ENCODE measurements at regions of chr12 and their contacts with region 1.

Region 1: GRCh38 chr12:108724054-108724889 is 7.0 kb downstream of the CORO1C start:
- DNase-seq: no peak
- H3K4me3 Mint-ChIP-seq: no peak overlapping the region
- H3K27ac Mint-ChIP-seq: peak overlapping the region; percentile 27
- H3K4me1 Mint-ChIP-seq: peaks cover 47% of the 10 kb centered on the region
- H3K27me3 Mint-ChIP-seq: peaks cover under 1% of the 10 kb centered on the region

Region 2: DNA sequence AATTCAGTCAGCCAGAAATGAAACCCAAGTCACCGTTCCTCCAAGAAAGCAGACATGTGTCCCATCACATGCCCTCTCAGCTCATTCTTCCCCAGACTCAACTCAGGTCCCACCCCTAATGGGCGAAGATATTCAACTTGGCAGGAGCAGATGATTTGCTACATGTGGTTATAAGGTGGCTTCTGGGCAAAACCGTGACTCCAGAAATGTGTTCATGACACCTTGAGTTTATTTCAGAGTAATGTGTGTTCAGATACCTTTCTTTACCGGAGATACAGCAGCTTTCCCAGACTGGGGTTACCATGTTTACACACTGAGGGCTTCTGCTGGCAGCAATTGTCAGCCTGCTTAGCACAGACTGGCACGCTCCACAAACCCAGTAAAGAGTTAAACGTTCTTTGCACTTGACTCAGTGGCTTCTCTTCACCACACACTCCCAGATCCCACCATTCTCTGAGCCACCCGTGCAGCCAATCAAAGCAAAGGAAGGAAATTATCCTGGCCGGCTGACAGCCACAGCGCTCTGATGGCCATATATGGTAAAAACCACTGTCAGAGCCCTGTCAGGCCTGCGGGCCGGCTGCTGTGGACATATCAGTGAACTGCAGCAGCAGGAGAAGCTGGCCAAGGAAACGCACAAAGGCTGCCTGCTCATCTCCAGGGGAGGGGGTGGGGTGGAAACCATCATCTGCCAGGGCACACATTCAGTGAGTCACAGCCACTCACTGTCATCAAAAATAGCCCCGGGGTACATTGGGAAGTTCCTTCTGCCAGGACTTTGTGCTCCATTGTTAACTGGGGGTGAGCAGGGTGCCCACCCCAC is 32.9 kb before region 1 on chr12:
- intact Hi-C with region 1: loop called (anchors 1 kb)
- DNase-seq: peak; percentile 55
- H3K4me3 Mint-ChIP-seq: peak overlapping the region; percentile 62
- H3K27ac Mint-ChIP-seq: peak overlapping the region; percentile 99
- H3K4me1 Mint-ChIP-seq: peaks cover 64% of the 10 kb centered on the region
- H3K27me3 Mint-ChIP-seq: no peaks in the 10 kb centered on the region

Region 3: GRCh38 chr12:108734200-108734906 is 10.1 kb after region 1 on chr12:
- intact Hi-C with region 1: no loop called
- DNase-seq: no peak
- H3K4me3 Mint-ChIP-seq: no peak overlapping the region
- H3K27ac Mint-ChIP-seq: peak overlapping the region; percentile 75
- H3K4me1 Mint-ChIP-seq: peaks cover 30% of the 10 kb centered on the region
- H3K27me3 Mint-ChIP-seq: peaks cover 7% of the 10 kb centered on the region

Measured in activated T-helper 2 cell treated with anti-CD3 and anti-CD28 coated beads, Interferon-gamma antibody, Interleukin-2, Interleukin-4, amounts not matched to agents 10 μg/mL and 5 μg/mL and 100 μg/mL, durations not matched to agents 14 hours and 24 hours and 36 hours (primary cell).